ENCODE measurements at regions of chr3 and their contacts with region 1.

Region 1: GRCh38 chr3:77254967-77255831 is 215.3 kb downstream of the ROBO2 start:
- DNase-seq: peak in 3 of 6 donors; percentile 25 to 56 (median 51)
- ATAC-seq: peak; percentile 73 to 97 (median 93)
- H3K4me3 ChIP-seq: no peak overlapping the region
- H3K27ac ChIP-seq: no peak overlapping the region
- H3K4me1 ChIP-seq: no peaks in the 10 kb centered on the region
- H3K27me3 ChIP-seq: no peaks in the 10 kb centered on the region
- CTCF ChIP-seq: peak in 3 of 4 donors; percentile 54 to 64 (median 61)

Region 2: GRCh38 chr3:77038468-77038929 is 216.7 kb before region 1 on chr3:
- intact Hi-C with region 1: loop called (anchors 5 to 10 kb)
- DNase-seq: peak; percentile 44 to 72 (median 61)
- ATAC-seq: peak; percentile 91 to 97 (median 94)
- H3K4me3 ChIP-seq: peak overlapping the region in 1 of 4 donors; percentile 47
- H3K27ac ChIP-seq: no peak overlapping the region
- H3K4me1 ChIP-seq: peaks cover 0 to 5% (median 4%) of the 10 kb centered on the region in 3 donors
- H3K27me3 ChIP-seq: peaks cover 0 to 27% (median 0%) of the 10 kb centered on the region in 4 donors
- CTCF ChIP-seq: peak in 3 of 4 donors; percentile 41 to 57 (median 50)